ENCODE measurements at regions of chr6 and their contacts with region 1.

Region 1: GRCh38 chr6:165662749-165663282 is at the start of gene PDE10A:
- DNase-seq: peak; percentile 57
- H3K4me3 ChIP-seq: peak within 1 kb of the TSS; percentile 4 to 59 (median 43)
- H3K27ac ChIP-seq: no peak within 1 kb of the TSS
- H3K4me1 ChIP-seq: peaks cover 13% of the 10 kb centered on the region
- H3K27me3 ChIP-seq: peaks cover 36 to 62% of the 10 kb centered on the region in 2 experiments
- CTCF ChIP-seq: no peak
- POLR2A ChIP-seq: no peak
- total RNA-seq, gene PDE10A: 2.9 and 6.5 TPM in 2 replicates

Region 2: DNA sequence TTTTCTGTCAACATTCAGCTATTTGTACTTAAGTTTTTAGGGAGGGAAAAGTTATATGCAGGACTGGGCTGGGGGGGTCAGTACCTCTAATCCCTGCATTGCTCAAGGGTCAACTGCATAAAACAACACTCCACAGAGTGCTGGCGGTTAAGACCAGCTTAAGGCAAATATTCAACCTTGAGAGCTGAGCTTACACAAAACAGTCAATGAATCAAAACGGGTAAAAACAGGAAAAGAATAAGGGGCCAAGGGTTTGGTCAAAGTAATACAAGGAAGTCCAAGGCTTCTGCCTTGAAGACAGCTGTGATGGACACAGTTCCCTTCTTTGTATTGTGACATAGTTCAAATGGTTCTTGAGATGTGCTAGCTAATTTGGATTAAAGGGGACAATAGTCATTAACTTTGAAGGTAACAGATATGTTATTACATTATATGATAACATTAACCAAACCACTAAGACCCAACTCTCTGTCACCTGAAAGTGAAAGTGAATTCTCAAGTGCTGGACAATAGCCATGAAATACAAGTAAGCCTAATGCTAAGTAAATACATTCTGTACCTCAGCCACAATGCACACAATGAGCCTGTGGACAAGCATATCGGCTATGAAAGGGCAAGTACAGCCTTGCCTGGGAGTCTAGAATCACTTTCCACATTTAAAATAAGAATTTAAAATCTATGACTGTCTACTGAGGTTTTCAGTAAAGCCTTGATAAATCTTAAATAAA is 106.5 kb before region 1 on chr6:
- CTCF ChIA-PET with region 1: no interaction called
- POLR2A ChIA-PET with region 1: no interaction called
- dilution Hi-C with region 1: no loop called
- intact Hi-C with region 1: loop called (anchors 5 kb)
- DNase-seq: peak; percentile 85
- H3K4me3 ChIP-seq: no peak overlapping the region
- H3K27ac ChIP-seq: no peak overlapping the region
- H3K4me1 ChIP-seq: peaks cover 7% of the 10 kb centered on the region
- H3K27me3 ChIP-seq: peaks cover 0 to 4% of the 10 kb centered on the region in 2 experiments
- CTCF ChIP-seq: no peak
- POLR2A ChIP-seq: no peak

Region 3: GRCh38 chr6:165585060-165585459 is 77.8 kb before region 1 on chr6:
- CTCF ChIA-PET with region 1: no interaction called
- POLR2A ChIA-PET with region 1: no interaction called
- dilution Hi-C with region 1: no loop called
- intact Hi-C with region 1: loop called (anchors 5 kb)
- DNase-seq: peak; percentile 63
- H3K4me3 ChIP-seq: no peak overlapping the region
- H3K27ac ChIP-seq: peak overlapping the region; percentile 42
- H3K4me1 ChIP-seq: peaks cover 3% of the 10 kb centered on the region
- H3K27me3 ChIP-seq: no peaks in the 10 kb centered on the region
- CTCF ChIP-seq: no peak
- POLR2A ChIP-seq: no peak

Region 4: DNA sequence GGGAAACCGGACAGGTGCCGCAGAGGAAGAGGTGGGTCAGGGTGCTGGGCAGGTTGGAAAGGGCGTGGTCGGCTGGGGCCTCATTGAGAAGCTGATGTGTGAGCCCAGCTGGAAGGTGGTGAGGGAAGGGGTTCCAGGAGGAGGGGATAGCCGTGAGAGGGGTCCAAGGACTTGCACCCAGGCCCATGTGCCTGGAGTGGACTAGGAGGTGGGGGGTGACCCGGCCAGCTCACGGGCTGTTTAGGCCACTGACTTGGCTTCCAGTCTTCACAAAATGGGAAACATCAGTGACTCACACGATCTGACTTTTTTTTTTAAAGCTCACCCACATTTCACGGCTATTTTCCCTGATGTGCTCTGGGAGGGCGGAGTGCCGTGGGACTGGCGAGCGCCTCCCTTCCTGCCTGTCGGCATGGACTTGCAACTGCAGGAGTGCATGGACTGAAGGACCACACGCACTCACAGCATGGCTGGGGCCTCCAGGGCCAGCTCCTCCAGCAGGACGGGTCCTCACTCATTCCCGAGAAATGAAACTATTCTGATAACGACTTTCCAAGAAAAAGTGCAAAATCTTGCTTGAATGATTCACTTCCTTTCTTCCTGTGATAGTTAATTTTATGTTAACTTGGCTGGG is 13.7 kb after region 1 on chr6:
- CTCF ChIA-PET with region 1: interaction called, 11 read pairs
- POLR2A ChIA-PET with region 1: no interaction called
- dilution Hi-C with region 1: no loop called
- intact Hi-C with region 1: loop called (anchors 1 kb)
- DNase-seq: peak; percentile 89
- H3K4me3 ChIP-seq: no peak overlapping the region
- H3K27ac ChIP-seq: peak overlapping the region; percentile 25
- H3K4me1 ChIP-seq: peaks cover 9% of the 10 kb centered on the region
- H3K27me3 ChIP-seq: no peaks in the 10 kb centered on the region
- CTCF ChIP-seq: peak; percentile 32 to 68
- POLR2A ChIP-seq: no peak

Region 5: GRCh38 chr6:165774903-165775601 is 112.2 kb after region 1 on chr6:
- CTCF ChIA-PET with region 1: interaction called, 3 read pairs
- POLR2A ChIA-PET with region 1: no interaction called
- dilution Hi-C with region 1: no loop called
- intact Hi-C with region 1: loop called (anchors 2 kb)
- DNase-seq: peak; percentile 99
- H3K4me3 ChIP-seq: peak overlapping the region in 1 of 3 experiments; percentile 5
- H3K27ac ChIP-seq: peak overlapping the region; percentile 92
- H3K4me1 ChIP-seq: peaks cover 12% of the 10 kb centered on the region
- H3K27me3 ChIP-seq: peaks cover 0 to 1% of the 10 kb centered on the region in 2 experiments
- CTCF ChIP-seq: no peak
- POLR2A ChIP-seq: no peak